ENCODE measurements at regions of chr7 and their contacts with region 1.

Region 1: DNA sequence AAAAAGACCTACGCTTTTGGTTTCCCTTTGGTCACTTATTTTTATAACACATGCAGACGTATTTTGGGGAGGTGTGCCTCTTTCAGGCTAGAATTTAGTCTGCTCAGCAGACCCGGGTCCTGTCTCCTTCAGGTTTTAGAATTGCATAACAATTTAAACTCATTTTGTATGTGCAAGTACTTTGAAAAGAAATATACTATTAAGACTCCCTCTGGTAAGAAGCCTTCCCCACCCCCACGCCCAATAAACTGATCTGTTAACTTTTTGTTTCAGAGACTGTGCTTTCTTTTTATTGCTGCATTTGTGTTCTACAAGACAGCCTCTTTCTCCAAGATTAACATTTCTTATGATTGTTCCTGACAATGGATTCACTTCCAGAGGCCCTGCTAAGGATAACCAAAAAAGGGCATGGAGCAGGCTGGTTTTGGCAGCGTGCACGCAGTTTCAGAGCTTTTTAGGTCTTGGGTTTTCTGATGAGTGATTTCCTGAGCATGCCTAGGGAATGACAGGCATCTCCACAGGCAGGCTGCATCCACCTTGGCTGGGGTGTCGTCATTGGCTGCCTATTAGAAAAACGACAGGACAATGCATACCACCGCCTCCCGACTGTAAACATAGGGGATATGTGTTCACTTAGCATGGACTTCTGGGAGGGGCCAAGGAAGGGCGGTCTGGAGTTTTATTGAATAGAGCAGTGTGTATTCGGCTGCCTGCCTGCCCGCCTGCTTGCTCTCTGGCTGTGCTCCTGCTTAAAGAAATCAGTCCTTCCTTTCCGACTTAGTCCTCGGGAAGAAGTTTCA is at the start of gene CALD1:
- DNase-seq: peak; percentile 99
- H3K4me3 ChIP-seq: peak within 1 kb of the TSS; percentile 71
- H3K27ac ChIP-seq: peak within 1 kb of the TSS; percentile 97
- H3K27me3 ChIP-seq: no peaks in the 10 kb centered on the region
- CTCF ChIP-seq: no peak
- polyA plus RNA-seq, gene CALD1: 578 and 804 TPM in 2 replicates

Region 2: GRCh38 chr7:134766779-134767519 is 12.2 kb before region 1 on chr7:
- CTCF ChIA-PET with region 1: no interaction called
- POLR2A ChIA-PET with region 1: interaction called, 10 read pairs
- DNase-seq: no peak
- H3K4me3 ChIP-seq: no peak overlapping the region
- H3K27ac ChIP-seq: no peak overlapping the region
- H3K27me3 ChIP-seq: no peaks in the 10 kb centered on the region
- CTCF ChIP-seq: no peak